IMR-90 (cell line): ENCODE measurements at regions of chr4 and their contacts with region 1.

Region 1: DNA sequence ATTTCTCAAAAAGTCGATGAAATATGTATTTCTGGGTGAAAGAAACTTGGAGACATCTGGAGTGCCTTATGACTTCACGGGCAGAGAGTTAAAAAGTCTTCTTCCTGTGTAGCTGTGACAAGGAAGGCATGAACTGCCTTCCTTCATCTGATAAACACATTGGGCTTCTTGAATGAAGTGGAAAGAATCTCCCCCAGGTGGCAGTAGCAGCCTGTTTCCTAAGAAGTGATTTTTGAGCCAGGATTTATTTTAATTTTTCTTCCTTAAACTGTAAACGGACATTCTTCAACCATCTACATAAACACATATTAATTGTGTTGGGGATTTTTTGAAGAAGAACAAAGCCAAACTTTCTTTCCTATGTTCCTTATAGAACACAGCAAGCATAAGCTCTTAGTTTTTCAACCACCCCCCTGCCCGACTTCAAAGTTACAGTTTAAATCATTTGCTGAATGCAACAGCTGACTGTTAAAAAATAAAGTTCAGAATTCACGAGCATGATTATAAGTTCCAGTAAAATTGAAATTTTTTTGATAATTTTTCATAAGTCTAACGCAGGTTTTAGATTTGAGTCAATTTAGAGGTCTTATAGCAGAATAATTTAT is 980 bp upstream of the GIMD1 start:
- DNase-seq: peak; percentile 86
- ATAC-seq: peak; percentile 56
- H3K4me3 ChIP-seq: no peak overlapping the region
- H3K27ac ChIP-seq: no peak overlapping the region
- H3K4me1 ChIP-seq: peaks cover 3% of the 10 kb centered on the region
- H3K27me3 ChIP-seq: no peaks in the 10 kb centered on the region; the same call in 1 of the 2 replicates
- CTCF ChIP-seq: peak; percentile 83
- POLR2A ChIP-seq: no peak
- RAD21 ChIP-seq: peak; percentile 80

Region 2: GRCh38 chr4:106266201-106266600 is 103.4 kb before region 1 on chr4:
- CTCF ChIA-PET with region 1: interaction called, 4 read pairs
- POLR2A ChIA-PET with region 1: no interaction called
- dilution Hi-C with region 1: no loop called
- in situ Hi-C with region 1: no loop called
- intact Hi-C with region 1: loop called (anchors 1 kb)
- DNase-seq: peak; percentile 68
- ATAC-seq: peak; percentile 75
- H3K4me3 ChIP-seq: no peak overlapping the region
- H3K27ac ChIP-seq: no peak overlapping the region
- H3K4me1 ChIP-seq: no peaks in the 10 kb centered on the region
- H3K27me3 ChIP-seq: no peaks in the 10 kb centered on the region
- CTCF ChIP-seq: peak; percentile 69
- POLR2A ChIP-seq: no peak
- RAD21 ChIP-seq: peak; percentile 81

Region 3: GRCh38 chr4:106502106-106502699 is 132.6 kb after region 1 on chr4:
- CTCF ChIA-PET with region 1: interaction called, 7 read pairs
- POLR2A ChIA-PET with region 1: no interaction called
- dilution Hi-C with region 1: no loop called
- in situ Hi-C with region 1: loop called (anchors 5 kb)
- intact Hi-C with region 1: loop called (anchors 1 kb)
- DNase-seq: peak; percentile 55
- ATAC-seq: peak; percentile 92
- H3K4me3 ChIP-seq: no peak overlapping the region
- H3K27ac ChIP-seq: no peak overlapping the region
- H3K4me1 ChIP-seq: no peaks in the 10 kb centered on the region
- H3K27me3 ChIP-seq: peaks cover 3% of the 10 kb centered on the region; the same call in 1 of the 2 replicates
- CTCF ChIP-seq: peak; percentile 78
- POLR2A ChIP-seq: no peak
- RAD21 ChIP-seq: peak; percentile 75

Region 4: DNA sequence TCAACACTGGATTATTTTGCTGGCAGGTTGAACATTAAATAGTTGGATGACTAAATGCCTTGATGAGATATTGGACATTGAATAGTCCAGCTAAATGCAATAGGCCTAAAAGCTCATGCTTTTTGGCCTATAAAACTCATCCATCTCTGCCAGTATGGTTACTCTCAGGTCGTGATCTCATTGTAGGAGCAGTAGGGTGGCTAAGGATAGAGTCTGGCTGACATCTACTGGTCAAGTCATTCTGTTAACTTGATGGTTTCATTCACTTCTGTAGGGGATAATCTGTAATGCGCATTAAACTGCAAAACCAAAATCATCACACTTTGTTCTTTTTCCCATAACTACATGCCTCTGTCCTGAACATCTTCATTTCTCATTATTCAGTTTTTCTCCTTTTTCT is 439.5 kb after region 1 on chr4:
- CTCF ChIA-PET with region 1: interaction called, 4 read pairs
- POLR2A ChIA-PET with region 1: no interaction called
- dilution Hi-C with region 1: no loop called
- in situ Hi-C with region 1: no loop called
- intact Hi-C with region 1: loop called (anchors 1 kb)
- DNase-seq: peak; percentile 25
- ATAC-seq: 0 out of 2 replicates have a peak, but pooled peaks have one; percentile 51
- H3K4me3 ChIP-seq: no peak overlapping the region
- H3K27ac ChIP-seq: no peak overlapping the region
- H3K4me1 ChIP-seq: no peaks in the 10 kb centered on the region
- H3K27me3 ChIP-seq: no peaks in the 10 kb centered on the region
- CTCF ChIP-seq: peak; percentile 30; the same call in 1 of the 2 replicates
- POLR2A ChIP-seq: no peak
- RAD21 ChIP-seq: peak; percentile 46

Region 5: DNA sequence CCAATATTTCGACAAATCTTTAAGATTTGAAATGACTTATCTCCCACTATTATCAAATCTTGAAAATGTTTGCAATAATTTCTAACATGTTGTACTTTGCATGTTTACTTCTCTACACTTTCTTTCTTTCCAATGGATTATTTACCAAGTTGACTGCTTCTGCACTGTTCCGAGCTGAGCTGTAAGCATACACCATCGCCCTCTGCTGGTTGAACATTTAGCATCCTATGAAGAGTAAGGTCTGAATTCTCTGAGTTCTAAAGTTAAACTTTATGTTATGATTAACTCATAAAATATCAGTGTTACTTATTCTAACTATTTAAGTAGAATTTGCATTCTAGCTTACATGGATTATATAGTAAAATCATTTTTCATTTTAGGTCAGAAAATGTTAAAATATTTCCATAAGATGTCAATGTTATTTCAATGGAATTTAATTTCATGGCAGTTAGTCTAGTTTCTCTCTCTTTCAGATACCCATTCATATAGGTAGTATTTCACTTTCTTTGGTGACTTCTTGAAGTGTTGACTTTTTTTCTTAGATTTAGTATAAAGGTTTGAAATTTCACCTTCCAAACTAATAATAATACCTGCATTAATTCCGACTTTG is 529.2 kb after region 1 on chr4:
- CTCF ChIA-PET with region 1: interaction called, 3 read pairs
- POLR2A ChIA-PET with region 1: no interaction called
- dilution Hi-C with region 1: no loop called
- in situ Hi-C with region 1: loop called (anchors 5 kb)
- intact Hi-C with region 1: loop called (anchors 1 kb)
- DNase-seq: peak; percentile 53
- ATAC-seq: peak; percentile 60; the same call in 1 of the 2 replicates
- H3K4me3 ChIP-seq: no peak overlapping the region
- H3K27ac ChIP-seq: no peak overlapping the region
- H3K4me1 ChIP-seq: no peaks in the 10 kb centered on the region
- H3K27me3 ChIP-seq: no peaks in the 10 kb centered on the region
- CTCF ChIP-seq: peak; percentile 55
- POLR2A ChIP-seq: no peak
- RAD21 ChIP-seq: peak; percentile 52

Region 6: GRCh38 chr4:107183155-107183774 is 813.7 kb after region 1 on chr4:
- CTCF ChIA-PET with region 1: no interaction called
- POLR2A ChIA-PET with region 1: no interaction called
- dilution Hi-C with region 1: no loop called
- in situ Hi-C with region 1: no loop called
- intact Hi-C with region 1: loop called (anchors 5 kb)
- DNase-seq: peak; percentile 58
- ATAC-seq: peak; percentile 98
- H3K4me3 ChIP-seq: no peak overlapping the region
- H3K27ac ChIP-seq: no peak overlapping the region
- H3K4me1 ChIP-seq: no peaks in the 10 kb centered on the region
- H3K27me3 ChIP-seq: 0 out of 2 replicates have a peak, but pooled peaks cover 1% of the 10 kb centered on the region
- CTCF ChIP-seq: peak; percentile 76
- POLR2A ChIP-seq: no peak
- RAD21 ChIP-seq: peak; percentile 63